GM10248 (cell line): ENCODE measurements at regions of chr13 and their contacts with region 1.

Region 1: DNA sequence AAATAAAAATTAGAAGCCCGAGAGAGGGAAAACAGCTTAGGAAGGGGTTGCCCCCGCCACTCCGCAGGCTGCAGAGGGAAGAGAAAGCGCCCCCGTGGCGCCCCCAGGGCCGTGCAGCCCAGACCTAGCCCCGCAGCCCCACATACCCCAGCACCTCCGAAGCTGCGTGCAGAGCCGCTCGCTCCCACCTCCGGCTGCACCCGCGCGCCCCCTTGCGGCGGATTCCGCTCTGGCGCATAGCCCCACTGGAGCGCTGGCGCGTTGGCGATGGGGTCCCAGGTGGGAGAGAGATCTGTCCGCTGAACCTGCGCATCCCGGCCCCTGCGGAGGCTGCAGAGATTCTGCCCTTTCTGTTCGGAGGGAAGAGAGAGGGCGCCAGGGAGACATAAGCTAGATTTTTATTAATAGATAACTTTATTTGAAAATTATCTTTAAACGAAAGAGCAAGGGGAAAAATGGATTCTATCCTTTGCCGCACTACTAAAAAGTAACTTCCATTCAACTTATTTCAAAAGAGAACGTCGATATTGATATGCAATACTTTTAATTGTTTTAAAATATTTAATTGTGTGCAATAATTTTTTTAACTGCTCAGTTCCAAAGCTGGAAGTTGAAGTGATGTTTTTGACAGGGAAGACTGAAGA is 11.7 kb upstream of the CLN5 start:
- DNase-seq: peak; percentile 93
- CTCF ChIP-seq: peak; percentile 99

Region 2: GRCh38 chr13:76711550-76712182 is 268.5 kb before region 1 on chr13:
- CTCF ChIA-PET with region 1: no interaction called
- POLR2A ChIA-PET with region 1: no interaction called
- DNase-seq: no peak
- CTCF ChIP-seq: no peak

Region 3: DNA sequence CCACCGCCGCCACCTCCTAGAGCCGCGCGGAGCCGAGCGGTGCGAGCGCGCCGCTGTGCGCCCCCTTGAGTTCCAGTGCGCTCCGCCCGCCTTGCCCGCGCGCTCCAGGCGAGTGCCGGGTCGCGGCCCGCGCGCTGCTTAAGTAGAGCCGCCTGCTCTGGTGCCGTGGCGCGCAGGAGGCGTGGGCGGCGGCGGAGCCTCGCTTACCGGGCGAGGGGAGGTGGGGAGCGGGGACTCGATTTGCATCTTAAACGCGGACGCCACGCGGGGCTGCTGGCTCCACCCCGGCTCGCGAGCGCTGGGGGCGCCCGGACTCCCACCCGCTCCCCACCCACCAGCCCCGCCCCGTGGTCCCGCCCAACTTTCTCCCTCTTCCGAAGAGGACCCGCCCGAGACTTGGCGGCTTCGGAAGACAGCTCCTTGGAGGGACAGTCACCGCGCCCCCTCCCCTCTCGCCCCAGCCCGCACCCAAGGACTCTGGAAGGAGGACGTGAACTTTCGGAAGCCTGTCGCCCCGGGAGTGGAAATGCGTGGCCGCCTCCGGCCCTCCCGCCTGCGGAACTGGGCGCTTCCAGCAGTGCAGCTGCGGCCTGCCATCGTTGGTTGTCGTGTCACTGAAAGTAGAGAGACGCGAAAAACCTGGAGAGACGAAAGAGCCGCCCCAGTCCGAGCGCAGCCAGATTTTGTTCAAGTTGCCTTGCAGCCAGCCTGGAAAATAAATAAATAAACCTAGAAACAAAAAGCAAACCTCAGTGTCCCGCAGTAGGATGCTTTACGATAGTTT is 93.7 kb before region 1 on chr13 and contains the start of gene KCTD12:
- CTCF ChIA-PET with region 1: interaction called, 14 read pairs
- POLR2A ChIA-PET with region 1: no interaction called
- DNase-seq: peak; percentile 83
- CTCF ChIP-seq: peak; percentile 60

Region 4: GRCh38 chr13:76991796-76992547 is 11.8 kb after region 1 on chr13 and contains the start of gene CLN5:
- CTCF ChIA-PET with region 1: interaction called, 57 read pairs
- POLR2A ChIA-PET with region 1: no interaction called
- DNase-seq: peak; percentile 97
- CTCF ChIP-seq: no peak